HEK293 (cell line): ENCODE measurements at regions of chr17 and their contacts with region 1.

Region 1: GRCh38 chr17:60641810-60642220 is 35.8 kb upstream of the BCAS3 start:
- H3K4me3 ChIP-seq: no peak overlapping the region
- H3K27ac ChIP-seq: no peak overlapping the region
- H3K4me1 ChIP-seq: peaks cover 12% of the 10 kb centered on the region
- CTCF ChIP-seq: peak; percentile 68; the same call in 1 of the 2 replicates

Region 2: GRCh38 chr17:60594734-60595133 is 47.1 kb before region 1 on chr17:
- CTCF ChIA-PET with region 1: interaction called, 12 read pairs
- POLR2A ChIA-PET with region 1: interaction called, 8 read pairs
- H3K4me3 ChIP-seq: no peak overlapping the region
- H3K27ac ChIP-seq: no peak overlapping the region
- H3K4me1 ChIP-seq: peaks cover 16% of the 10 kb centered on the region
- CTCF ChIP-seq: no peak

Region 3: GRCh38 chr17:60630352-60630751 is 11.5 kb before region 1 on chr17:
- CTCF ChIA-PET with region 1: interaction called, 19 read pairs
- POLR2A ChIA-PET with region 1: no interaction called
- H3K4me3 ChIP-seq: no peak overlapping the region
- H3K27ac ChIP-seq: no peak overlapping the region; the same call in 1 of the 2 replicates
- H3K4me1 ChIP-seq: peaks cover 14% of the 10 kb centered on the region
- CTCF ChIP-seq: no peak

Region 4: DNA sequence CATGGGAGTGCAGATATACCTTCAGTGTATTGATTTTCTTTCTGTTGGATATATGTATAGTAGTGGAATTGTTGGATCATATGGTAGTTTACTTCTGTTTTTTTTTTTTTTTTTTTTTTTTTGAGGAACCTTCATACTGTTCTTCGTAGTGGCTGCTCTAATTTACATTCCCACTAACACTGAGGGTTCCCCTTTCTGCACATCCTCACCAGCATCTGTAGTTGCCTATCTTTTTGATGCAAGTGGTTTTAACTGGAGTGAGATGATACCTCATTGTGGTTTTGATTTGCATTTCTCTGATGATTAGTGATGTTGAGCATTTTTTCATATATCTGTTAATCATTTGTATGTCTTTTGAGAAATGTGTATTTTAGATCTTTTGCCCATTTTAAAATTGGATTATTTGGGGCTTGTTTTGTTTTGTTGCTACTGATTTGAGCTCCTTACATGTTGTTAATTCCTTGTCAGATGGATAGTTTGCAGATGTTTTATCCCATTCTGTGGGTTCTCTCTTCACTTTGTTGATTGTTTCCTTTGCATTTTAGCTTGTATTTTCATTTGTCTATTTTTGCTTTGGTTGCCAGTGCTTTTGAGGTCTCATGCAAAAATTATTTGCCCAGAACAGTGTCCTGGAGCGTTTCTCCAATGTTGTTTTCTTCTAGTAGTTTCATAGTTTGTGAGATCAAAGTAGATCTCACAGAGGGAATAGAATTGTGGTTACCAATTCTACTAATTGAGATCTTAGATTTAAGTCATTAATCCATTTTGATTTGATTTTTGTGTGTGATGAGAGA is 10.8 kb after region 1 on chr17:
- CTCF ChIA-PET with region 1: interaction called, 16 read pairs
- POLR2A ChIA-PET with region 1: no interaction called
- H3K4me3 ChIP-seq: no peak overlapping the region
- H3K27ac ChIP-seq: no peak overlapping the region
- H3K4me1 ChIP-seq: no peaks in the 10 kb centered on the region
- CTCF ChIP-seq: no peak

Region 5: GRCh38 chr17:60720763-60721531 is 79.1 kb after region 1 on chr17:
- CTCF ChIA-PET with region 1: no interaction called
- POLR2A ChIA-PET with region 1: no interaction called
- H3K4me3 ChIP-seq: no peak overlapping the region
- H3K27ac ChIP-seq: no peak overlapping the region
- H3K4me1 ChIP-seq: no peaks in the 10 kb centered on the region
- CTCF ChIP-seq: 0 out of 2 replicates have a peak, but pooled peaks have one; percentile 35

Region 6: GRCh38 chr17:61383689-61384201 is 741.9 kb after region 1 on chr17:
- CTCF ChIA-PET with region 1: no interaction called
- POLR2A ChIA-PET with region 1: no interaction called
- H3K4me3 ChIP-seq: no peak overlapping the region
- H3K27ac ChIP-seq: no peak overlapping the region
- H3K4me1 ChIP-seq: no peaks in the 10 kb centered on the region
- CTCF ChIP-seq: no peak